ENCODE measurements at regions of chr17 and their contacts with region 1.

Region 1: GRCh38 chr17:27353461-27354050 is 59.6 kb downstream of the WSB1 start:
- DNase-seq: peak; percentile 97

Region 2: DNA sequence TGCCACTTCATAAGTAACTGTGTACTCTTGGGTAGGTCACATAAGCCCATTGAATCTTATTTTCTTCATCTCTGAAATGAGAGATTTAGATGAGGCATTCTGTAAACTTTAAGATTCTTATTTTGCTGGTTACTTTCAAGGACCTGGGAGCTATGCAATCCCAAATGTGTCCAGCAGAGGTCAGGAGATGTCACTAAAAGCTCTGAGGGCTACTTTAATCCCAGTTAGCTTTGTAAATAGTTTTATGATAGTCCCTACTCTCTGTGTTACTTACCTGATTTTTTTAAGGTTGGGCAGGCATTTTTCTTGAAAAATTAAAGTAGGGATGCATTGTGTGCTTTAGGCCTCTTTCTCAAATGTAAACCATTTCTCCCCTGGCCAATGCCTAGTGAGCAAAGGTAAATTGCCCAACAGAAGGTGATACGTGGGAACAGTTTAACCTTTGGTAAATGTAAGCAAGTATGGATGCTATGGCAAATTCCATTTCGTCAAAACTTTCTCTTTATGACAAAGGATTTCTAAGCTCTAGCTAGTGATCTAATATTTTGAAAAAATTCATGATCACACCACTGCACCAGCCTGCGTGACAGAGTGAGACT is 116.7 kb before region 1 on chr17:
- intact Hi-C with region 1: loop called (anchors 5 kb)
- DNase-seq: no peak

Region 3: GRCh38 chr17:27332485-27333409 is 20.8 kb before region 1 on chr17:
- intact Hi-C with region 1: loop called (anchors 1 kb)
- DNase-seq: peak; percentile 99

Region 4: GRCh38 chr17:27430882-27431491 is 77.4 kb after region 1 on chr17:
- intact Hi-C with region 1: loop called (anchors 5 kb)
- DNase-seq: peak; percentile 61

Region 5: DNA sequence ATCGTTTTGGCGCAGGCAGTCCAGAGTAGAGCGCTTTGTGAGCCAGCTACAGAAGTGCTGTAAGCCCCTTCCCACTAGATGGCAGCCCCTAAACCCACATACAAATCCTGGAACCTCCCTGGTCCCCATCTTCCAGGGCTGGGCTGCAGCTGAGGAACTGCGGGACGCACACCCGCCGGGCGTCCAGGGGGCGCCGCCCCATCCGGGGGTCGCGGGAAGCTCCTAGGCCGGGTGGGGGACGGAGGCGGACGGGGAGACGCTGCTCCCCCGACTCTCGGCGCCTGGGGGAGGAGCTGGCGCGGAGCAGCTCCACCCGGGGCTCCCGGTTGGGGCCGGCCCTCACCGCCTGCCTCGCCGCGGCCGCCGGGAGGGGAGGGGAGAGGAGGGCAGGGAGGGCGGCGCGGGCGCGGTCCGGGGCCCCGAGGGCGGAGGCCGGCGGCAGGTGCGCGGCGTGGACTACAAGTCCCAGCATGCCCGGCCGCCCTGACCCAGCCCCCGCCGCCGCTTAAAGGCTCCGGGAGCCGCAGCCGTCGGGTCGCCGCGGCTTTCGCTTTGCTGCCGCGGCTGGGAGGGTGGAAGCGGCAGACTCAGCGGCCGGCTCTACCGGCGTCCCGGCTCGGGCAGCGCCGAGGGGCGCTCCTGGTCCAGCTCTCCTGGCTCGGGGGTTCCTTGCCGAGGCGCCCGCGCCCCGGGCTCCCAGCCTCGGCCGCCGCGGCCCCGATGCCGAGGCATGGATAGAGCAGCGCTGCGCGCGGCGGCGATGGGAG is 102.5 kb after region 1 on chr17 and contains the start of gene KSR1:
- intact Hi-C with region 1: loop called (anchors 5 kb)
- DNase-seq: peak; percentile 91
- total RNA-seq, gene KSR1: 13.6 TPM

Region 6: GRCh38 chr17:27601069-27601975 is 247.8 kb after region 1 on chr17:
- intact Hi-C with region 1: loop called (anchors 2 kb)
- DNase-seq: peak; percentile 85

Region 7: GRCh38 chr17:27654654-27655524 is 301.3 kb after region 1 on chr17:
- intact Hi-C with region 1: loop called (anchors 10 kb)
- DNase-seq: peak; percentile 86

Measured in cardiac septum (tissue), 1 donor.